ENCODE measurements at regions of chr1 and their contacts with region 1.

Region 1: GRCh38 chr1:174800216-174800851 is 199.4 kb upstream of the CACYBP start:
- DNase-seq: peak in 4 of 9 donors; percentile 2 to 29 (median 16)
- ATAC-seq: peak; percentile 7
- H3K4me3 ChIP-seq: peak overlapping the region; percentile 73
- H3K4me3 Mint-ChIP-seq: no peak overlapping the region
- H3K27ac ChIP-seq: peak overlapping the region; percentile 81
- H3K27ac Mint-ChIP-seq: no peak overlapping the region
- H3K4me1 ChIP-seq: peaks cover 7 to 9% of the 10 kb centered on the region in 2 donors
- H3K4me1 Mint-ChIP-seq: peaks cover 0 to 18% (median 6%) of the 10 kb centered on the region in 7 donors
- H3K27me3 ChIP-seq: no peaks in the 10 kb centered on the region
- H3K27me3 Mint-ChIP-seq: no peaks in the 10 kb centered on the region

Region 2: GRCh38 chr1:174874331-174875053 is 74.2 kb after region 1 on chr1:
- CTCF ChIA-PET with region 1: no interaction called
- POLR2A ChIA-PET with region 1: interaction called, 4 read pairs
- intact Hi-C with region 1: loop called in 1 of 2 experiments (anchors 2 kb)
- DNase-seq: no peak
- ATAC-seq: peak; percentile 49
- H3K4me3 ChIP-seq: no peak overlapping the region
- H3K4me3 Mint-ChIP-seq: peak overlapping the region; percentile 55 to 77 (median 65)
- H3K27ac ChIP-seq: no peak overlapping the region
- H3K27ac Mint-ChIP-seq: peak overlapping the region in 8 of 9 donors; percentile 19 to 80 (median 65)
- H3K4me1 ChIP-seq: no peaks in the 10 kb centered on the region
- H3K4me1 Mint-ChIP-seq: peaks cover 4 to 40% (median 21%) of the 10 kb centered on the region in 7 donors
- H3K27me3 ChIP-seq: no peaks in the 10 kb centered on the region
- H3K27me3 Mint-ChIP-seq: no peaks in the 10 kb centered on the region

Region 3: DNA sequence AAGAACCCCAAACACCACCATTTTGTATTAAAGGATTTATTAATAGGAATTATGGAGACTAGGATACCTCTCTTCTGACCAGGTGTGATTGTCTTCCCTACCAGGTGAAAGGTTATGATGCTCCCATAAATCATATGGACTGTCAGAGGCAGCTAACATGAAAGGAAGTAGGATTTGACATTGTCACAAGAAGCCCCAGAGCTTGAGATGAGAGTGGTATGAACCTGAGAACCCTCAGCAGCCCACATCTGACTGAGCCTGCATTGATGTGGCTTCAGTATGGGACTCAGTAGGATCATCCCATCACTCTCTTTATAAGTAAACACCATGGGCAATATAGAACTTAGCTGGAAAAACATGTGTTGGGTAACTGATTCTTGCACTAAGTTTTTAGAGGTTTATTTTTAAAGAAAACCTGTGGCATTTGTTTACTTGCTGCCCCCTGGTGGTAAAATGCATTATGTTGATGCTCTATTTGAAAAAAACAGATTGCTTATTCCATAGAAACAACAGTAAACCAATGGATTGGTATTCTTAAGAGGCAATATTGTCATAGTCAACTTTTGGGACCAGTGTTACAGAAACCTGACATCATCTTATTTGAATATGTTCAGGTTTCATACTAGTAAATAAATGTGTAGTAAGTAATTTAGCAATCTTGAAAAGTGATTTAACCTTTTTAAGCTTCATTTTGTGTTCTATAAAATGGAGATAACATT is 182.8 kb after region 1 on chr1:
- CTCF ChIA-PET with region 1: interaction called, 11 read pairs
- POLR2A ChIA-PET with region 1: interaction called, 8 read pairs
- intact Hi-C with region 1: loop called in 1 of 2 experiments (anchors 1 kb)
- DNase-seq: peak in 7 of 9 donors; percentile 50 to 69 (median 58)
- ATAC-seq: peak; percentile 41
- H3K4me3 ChIP-seq: no peak overlapping the region
- H3K4me3 Mint-ChIP-seq: no peak overlapping the region
- H3K27ac ChIP-seq: no peak overlapping the region
- H3K27ac Mint-ChIP-seq: peak overlapping the region in 7 of 9 donors; percentile 19 to 91 (median 48)
- H3K4me1 ChIP-seq: peaks cover 0 to 9% of the 10 kb centered on the region in 2 donors
- H3K4me1 Mint-ChIP-seq: peaks cover 9 to 54% (median 40%) of the 10 kb centered on the region in 7 donors
- H3K27me3 ChIP-seq: no peaks in the 10 kb centered on the region
- H3K27me3 Mint-ChIP-seq: no peaks in the 10 kb centered on the region

Region 4: DNA sequence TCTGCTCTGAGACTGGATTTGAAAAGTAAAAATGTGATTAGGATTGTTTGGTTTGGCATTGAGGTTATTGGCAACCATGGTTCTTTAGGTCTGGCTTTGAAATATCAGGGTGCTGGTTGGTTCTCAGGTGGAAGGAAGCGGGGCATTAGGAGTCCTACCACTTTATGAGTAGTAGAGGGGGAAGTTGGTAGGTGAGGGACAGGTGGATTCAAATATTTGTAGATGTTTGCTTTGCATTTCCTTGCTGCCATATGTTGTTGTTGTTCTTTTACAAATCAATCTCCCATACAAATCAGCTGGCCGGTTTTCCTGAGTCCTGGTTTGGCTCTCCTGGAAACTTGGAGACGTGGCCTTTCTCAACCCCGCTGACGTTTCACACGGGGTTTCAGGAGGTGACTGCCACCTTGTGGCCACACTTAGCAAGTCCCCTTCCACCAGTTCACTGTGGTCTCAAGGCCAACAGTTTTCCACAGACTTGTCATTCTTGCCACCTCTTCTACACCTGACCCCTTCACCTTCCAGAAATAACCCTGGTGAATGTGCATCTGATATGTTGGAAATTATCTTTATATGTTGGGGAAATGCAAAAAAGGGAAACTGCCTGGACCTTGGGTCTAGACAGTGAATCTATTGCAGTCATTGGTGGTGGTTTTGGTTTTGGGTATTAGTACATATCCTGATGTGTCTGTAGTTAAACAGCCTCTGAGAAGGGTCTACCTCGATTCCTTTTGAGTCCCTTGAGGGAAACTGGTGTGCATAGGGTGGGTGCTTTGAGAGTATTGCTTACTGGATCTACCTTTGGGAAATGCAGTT is 519.3 kb after region 1 on chr1:
- CTCF ChIA-PET with region 1: no interaction called
- POLR2A ChIA-PET with region 1: no interaction called
- intact Hi-C with region 1: no loop called
- DNase-seq: peak; percentile 45 to 71 (median 62)
- ATAC-seq: peak; percentile 91
- H3K4me3 ChIP-seq: no peak overlapping the region
- H3K4me3 Mint-ChIP-seq: peak overlapping the region in 5 of 10 donors; percentile 8 to 44 (median 42)
- H3K27ac ChIP-seq: no peak overlapping the region
- H3K27ac Mint-ChIP-seq: no peak overlapping the region
- H3K4me1 ChIP-seq: peaks cover 4 to 5% of the 10 kb centered on the region in 2 donors
- H3K4me1 Mint-ChIP-seq: peaks cover 4 to 29% (median 18%) of the 10 kb centered on the region in 7 donors
- H3K27me3 ChIP-seq: no peaks in the 10 kb centered on the region
- H3K27me3 Mint-ChIP-seq: peaks cover 0 to 29% (median 5%) of the 10 kb centered on the region in 5 donors